ENCODE measurements at regions of chr15 and their contacts with region 1.

Region 1: GRCh38 chr15:37995461-37996347 is 61.3 kb downstream of the TMCO5A start:
- DNase-seq: no peak
- H3K4me3 Mint-ChIP-seq: no peak overlapping the region
- H3K27ac Mint-ChIP-seq: no peak overlapping the region
- H3K4me1 Mint-ChIP-seq: no peaks in the 10 kb centered on the region
- H3K27me3 Mint-ChIP-seq: no peaks in the 10 kb centered on the region
- CTCF ChIP-seq: peak; percentile 22

Region 2: GRCh38 chr15:38389924-38390542 is 394.3 kb after region 1 on chr15:
- CTCF ChIA-PET with region 1: no interaction called
- intact Hi-C with region 1: loop called (anchors 2 kb)
- DNase-seq: peak; percentile 71
- H3K4me3 Mint-ChIP-seq: no peak overlapping the region
- H3K27ac Mint-ChIP-seq: no peak overlapping the region
- H3K4me1 Mint-ChIP-seq: no peaks in the 10 kb centered on the region
- H3K27me3 Mint-ChIP-seq: peaks cover 8% of the 10 kb centered on the region
- CTCF ChIP-seq: peak; percentile 41

Region 3: GRCh38 chr15:38414357-38414756 is 418.7 kb after region 1 on chr15:
- CTCF ChIA-PET with region 1: interaction called, 3 read pairs
- intact Hi-C with region 1: loop called (anchors 2 kb)
- DNase-seq: peak; percentile 55
- H3K4me3 Mint-ChIP-seq: no peak overlapping the region
- H3K27ac Mint-ChIP-seq: no peak overlapping the region
- H3K4me1 Mint-ChIP-seq: no peaks in the 10 kb centered on the region
- H3K27me3 Mint-ChIP-seq: peaks cover 30% of the 10 kb centered on the region
- CTCF ChIP-seq: no peak